ENCODE measurements at regions of chr15 and their contacts with region 1.

Region 1: GRCh38 chr15:77784395-77785292 is 151.9 kb upstream of the LINGO1 start:
- H3K4me3 ChIP-seq: no peak overlapping the region
- H3K27ac ChIP-seq: no peak overlapping the region
- H3K4me1 ChIP-seq: no peaks in the 10 kb centered on the region
- CTCF ChIP-seq: no peak

Region 2: GRCh38 chr15:77659350-77660321 is 125.0 kb before region 1 on chr15:
- CTCF ChIA-PET with region 1: interaction called, 11 read pairs
- POLR2A ChIA-PET with region 1: no interaction called
- H3K4me3 ChIP-seq: no peak overlapping the region
- H3K27ac ChIP-seq: no peak overlapping the region
- H3K4me1 ChIP-seq: no peaks in the 10 kb centered on the region
- CTCF ChIP-seq: no peak

Region 3: DNA sequence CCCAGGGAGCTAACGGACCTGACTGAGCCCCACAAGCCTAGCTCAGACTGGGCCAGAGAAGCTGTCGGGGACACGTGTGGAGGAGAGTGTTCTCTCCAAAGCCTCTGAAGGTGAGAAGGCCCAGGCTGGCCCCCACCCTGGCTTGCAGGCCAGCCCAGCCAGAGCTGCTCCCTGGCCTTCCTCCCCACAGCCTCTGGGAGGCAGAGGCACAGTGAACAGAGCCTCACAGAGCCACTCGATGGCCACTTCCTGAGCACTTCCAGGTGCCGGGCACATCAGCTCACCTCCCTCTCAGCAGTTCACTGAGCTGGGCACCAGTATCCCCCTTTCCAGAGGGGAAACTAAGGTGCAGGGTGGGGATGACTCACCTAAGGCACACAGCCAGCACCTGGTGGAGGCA is 42.5 kb before region 1 on chr15:
- CTCF ChIA-PET with region 1: interaction called, 10 read pairs
- POLR2A ChIA-PET with region 1: no interaction called
- H3K4me3 ChIP-seq: no peak overlapping the region
- H3K27ac ChIP-seq: no peak overlapping the region
- H3K4me1 ChIP-seq: no peaks in the 10 kb centered on the region
- CTCF ChIP-seq: no peak

Region 4: DNA sequence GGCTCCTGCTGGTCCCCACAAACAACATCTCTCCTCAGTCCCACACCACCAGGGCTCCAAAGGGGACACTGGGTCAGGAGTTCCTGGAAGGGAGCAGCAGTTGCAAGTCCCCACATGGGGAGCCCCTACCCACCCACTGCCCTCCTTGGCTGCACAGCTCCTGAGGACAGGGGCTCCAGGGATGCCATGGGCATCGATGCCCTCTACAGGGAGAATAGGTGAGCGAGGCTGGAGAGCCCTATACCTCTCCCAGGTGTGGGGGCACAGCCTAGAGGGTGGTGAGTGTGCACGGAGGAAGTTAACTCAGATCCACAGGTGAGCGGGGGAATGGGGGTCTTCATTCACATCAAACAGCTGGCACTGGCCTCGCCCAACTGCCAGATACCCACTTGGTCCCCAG is 10.7 kb before region 1 on chr15:
- CTCF ChIA-PET with region 1: interaction called, 11 read pairs
- POLR2A ChIA-PET with region 1: no interaction called
- H3K4me3 ChIP-seq: no peak overlapping the region
- H3K27ac ChIP-seq: no peak overlapping the region
- H3K4me1 ChIP-seq: no peaks in the 10 kb centered on the region
- CTCF ChIP-seq: no peak

Region 5: DNA sequence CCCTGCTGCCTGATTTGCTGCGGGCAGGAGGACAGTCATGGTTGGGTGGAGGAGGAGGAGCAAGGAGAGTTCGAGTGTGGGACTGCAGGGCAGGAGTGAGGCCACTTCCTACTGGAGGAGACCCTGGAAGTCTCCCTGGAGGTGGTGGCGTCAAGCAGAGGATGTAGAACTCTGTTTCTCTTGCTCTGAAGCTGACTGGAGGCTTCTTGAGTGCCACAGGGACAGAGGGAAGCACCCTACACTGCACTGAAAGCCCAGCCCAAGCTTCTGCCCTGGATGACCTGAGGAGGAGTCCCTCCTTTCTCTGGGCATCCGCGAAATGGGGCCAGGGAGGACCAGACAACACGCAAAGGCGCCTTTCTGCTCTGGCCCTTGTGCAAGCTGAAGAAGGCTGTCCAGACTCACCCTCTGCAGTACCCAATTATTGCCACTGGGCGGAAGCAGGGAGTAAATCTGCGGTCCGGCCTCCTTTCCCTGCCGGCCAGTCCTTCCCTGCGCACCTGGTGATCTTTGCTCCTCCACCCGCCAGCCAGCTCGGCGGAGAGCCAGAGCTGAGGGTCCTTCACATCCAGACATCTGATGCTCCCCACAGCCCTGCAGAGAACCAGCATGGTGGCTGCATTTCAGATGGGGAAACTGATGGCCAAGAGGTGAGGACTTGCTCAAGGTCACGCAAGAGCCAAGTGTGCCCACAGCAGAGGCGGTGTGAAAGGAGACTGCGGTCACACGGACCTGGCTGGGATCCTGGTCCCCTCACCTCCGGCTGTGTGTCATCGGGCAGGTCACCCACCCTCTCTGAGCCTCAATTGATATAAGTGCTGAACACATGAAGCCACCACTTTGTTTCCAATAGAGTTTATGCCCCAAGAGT is 85.8 kb after region 1 on chr15:
- CTCF ChIA-PET with region 1: no interaction called
- POLR2A ChIA-PET with region 1: no interaction called
- H3K4me3 ChIP-seq: no peak overlapping the region
- H3K27ac ChIP-seq: no peak overlapping the region
- H3K4me1 ChIP-seq: 0 out of 2 replicates have a peak, but pooled peaks cover 2% of the 10 kb centered on the region
- CTCF ChIP-seq: peak; percentile 71

Measured in HEK293 (cell line).